Lower leg skin (tissue), 4 donors: ENCODE measurements at regions of chr4 and their contacts with region 1.

Region 1: GRCh38 chr4:146633471-146633800 is 5.3 kb upstream of the POU4F2 start:
- DNase-seq: no peak
- H3K4me3 ChIP-seq: no peak overlapping the region
- CTCF ChIP-seq: no peak
- POLR2A ChIP-seq: no peak

Region 2: GRCh38 chr4:146104541-146104940 is 528.9 kb before region 1 on chr4:
- intact Hi-C with region 1: loop called (anchors 5 kb)
- DNase-seq: no peak
- H3K4me3 ChIP-seq: no peak overlapping the region
- CTCF ChIP-seq: no peak
- POLR2A ChIP-seq: no peak